Dendritic cell treated with granulocyte-macrophage colony-stimulating factor and Interleukin-4, amounts not matched to agents 40 ng/mL and 50 ng/mL, for 4 days (primary cell): ENCODE measurements at regions of chr2 and their contacts with region 1.

Region 1: DNA sequence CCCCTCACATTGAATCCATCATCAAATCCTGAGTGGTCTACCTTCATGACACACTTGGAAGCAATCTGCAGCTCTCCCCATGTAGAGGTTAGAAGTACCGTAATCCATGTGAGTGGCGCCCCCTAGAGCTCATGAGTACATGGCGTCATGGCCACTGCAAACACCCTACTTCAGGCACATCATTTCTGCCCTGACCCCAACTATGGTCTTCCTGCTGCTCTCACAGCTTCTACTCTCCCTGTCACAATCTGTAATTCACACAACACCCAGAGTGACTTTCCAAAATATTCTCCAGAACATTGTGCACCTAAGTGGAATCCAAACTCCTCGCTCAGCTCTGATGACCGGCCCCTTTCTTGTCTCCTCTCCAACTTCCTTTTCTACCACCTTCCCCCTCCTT is 141.9 kb downstream of the ANKRD44 start:
- H3K4me3 Mint-ChIP-seq: no peak overlapping the region
- H3K27ac Mint-ChIP-seq: peak overlapping the region; percentile 71
- H3K4me1 Mint-ChIP-seq: peaks cover 60% of the 10 kb centered on the region
- H3K27me3 Mint-ChIP-seq: no peaks in the 10 kb centered on the region

Region 2: GRCh38 chr2:196987649-196988364 is 180.9 kb before region 1 on chr2:
- intact Hi-C with region 1: no loop called
- H3K4me3 Mint-ChIP-seq: peak overlapping the region; percentile 48
- H3K27ac Mint-ChIP-seq: peak overlapping the region; percentile 84
- H3K4me1 Mint-ChIP-seq: peaks cover 41% of the 10 kb centered on the region
- H3K27me3 Mint-ChIP-seq: no peaks in the 10 kb centered on the region

Region 3: DNA sequence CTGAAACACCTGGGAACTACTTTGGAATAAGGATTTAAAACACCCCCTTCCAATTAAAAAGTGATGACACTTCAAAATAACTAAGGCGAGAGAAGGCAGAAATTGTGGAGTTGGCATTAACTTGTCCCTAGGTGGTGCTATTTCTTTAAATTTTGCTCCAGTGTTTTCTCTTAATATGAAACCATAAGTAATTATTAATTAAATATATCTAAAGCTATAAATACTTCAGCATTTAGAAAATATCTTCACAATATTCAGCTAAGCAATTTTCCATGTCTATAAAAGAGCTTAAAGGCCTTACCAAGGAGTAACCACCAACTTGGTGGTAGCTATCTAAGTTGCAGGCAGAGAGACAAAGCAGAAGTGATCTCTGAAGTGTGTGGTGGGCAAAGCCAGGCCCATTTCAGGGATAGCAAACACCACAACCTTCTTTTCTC is 55.4 kb before region 1 on chr2:
- intact Hi-C with region 1: loop called (anchors 2 kb)
- H3K4me3 Mint-ChIP-seq: no peak overlapping the region
- H3K27ac Mint-ChIP-seq: no peak overlapping the region
- H3K4me1 Mint-ChIP-seq: peaks cover 25% of the 10 kb centered on the region
- H3K27me3 Mint-ChIP-seq: no peaks in the 10 kb centered on the region

Region 4: GRCh38 chr2:197124639-197125390 is 43.9 kb before region 1 on chr2:
- intact Hi-C with region 1: loop called (anchors 5 kb)
- H3K4me3 Mint-ChIP-seq: no peak overlapping the region
- H3K27ac Mint-ChIP-seq: no peak overlapping the region
- H3K4me1 Mint-ChIP-seq: peaks cover 12% of the 10 kb centered on the region
- H3K27me3 Mint-ChIP-seq: no peaks in the 10 kb centered on the region

Region 5: DNA sequence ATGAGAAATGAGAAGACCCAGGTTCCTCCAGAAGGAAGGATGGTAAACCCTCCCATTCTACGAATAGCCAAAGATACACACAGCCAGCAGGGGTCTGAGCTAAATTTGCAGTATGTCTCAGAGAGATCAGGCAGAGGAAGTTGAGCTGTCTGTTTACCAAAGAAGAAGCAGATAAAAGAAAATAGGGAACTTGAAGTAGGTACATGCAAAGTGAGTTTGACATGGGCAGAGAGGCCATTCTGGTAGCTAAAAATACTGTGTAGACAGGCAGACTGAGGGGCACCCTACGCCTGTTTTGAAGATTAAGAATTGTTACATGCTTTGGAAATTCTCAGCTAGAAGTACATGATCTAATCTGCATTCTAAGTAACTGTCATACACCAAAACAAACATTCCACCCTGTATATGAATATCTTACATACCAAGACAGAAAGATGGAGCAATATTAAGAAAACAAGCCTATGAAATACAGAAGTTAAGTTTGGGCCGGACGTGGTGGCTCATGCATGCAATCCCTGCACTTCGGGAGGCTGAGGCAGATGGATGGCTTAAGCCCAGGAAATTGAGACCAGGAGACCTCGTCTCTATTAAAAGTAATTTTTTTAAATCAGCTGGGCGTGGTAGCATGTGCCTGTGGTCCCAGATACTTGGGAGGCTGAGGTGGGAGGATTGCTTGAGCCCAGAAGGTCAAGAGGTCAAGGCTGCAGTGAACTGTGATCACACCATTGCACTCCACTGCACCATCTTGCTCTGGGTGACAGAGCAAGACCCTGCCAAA is 16.1 kb before region 1 on chr2:
- intact Hi-C with region 1: loop called (anchors 2 kb)
- H3K4me3 Mint-ChIP-seq: peak overlapping the region; percentile 59
- H3K27ac Mint-ChIP-seq: peak overlapping the region; percentile 94
- H3K4me1 Mint-ChIP-seq: peaks cover 54% of the 10 kb centered on the region
- H3K27me3 Mint-ChIP-seq: no peaks in the 10 kb centered on the region

Region 6: DNA sequence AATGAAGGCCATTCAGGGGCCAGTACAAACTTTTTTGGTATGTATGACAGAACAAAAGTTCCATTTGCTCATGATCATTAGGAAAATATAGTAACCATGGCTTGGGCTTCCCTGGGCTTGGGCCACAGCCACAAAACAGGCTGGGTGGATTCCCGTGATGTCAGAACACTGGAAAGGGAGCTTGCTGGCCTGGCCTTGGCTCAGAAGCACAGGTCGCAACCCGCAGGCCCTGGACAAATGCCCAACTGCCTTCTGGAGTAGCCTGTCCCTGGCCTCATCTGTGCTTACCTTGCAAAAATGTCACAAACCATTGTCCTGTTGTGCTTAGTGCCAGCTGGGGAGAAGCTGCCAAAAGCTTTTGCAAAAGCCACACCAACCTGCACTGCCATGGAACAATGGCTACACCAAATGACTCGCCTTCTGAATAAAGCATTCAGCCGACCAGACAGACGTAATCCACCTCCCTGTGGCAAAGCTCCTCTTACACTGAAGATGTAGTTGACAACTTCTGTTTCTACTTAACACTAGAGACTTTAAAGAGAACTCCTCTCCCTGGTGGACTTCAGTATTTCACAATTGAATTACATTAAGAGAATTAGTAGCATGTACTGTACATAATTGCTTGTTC is 16.4 kb after region 1 on chr2:
- intact Hi-C with region 1: no loop called
- H3K4me3 Mint-ChIP-seq: no peak overlapping the region
- H3K27ac Mint-ChIP-seq: no peak overlapping the region
- H3K4me1 Mint-ChIP-seq: peaks cover 48% of the 10 kb centered on the region
- H3K27me3 Mint-ChIP-seq: no peaks in the 10 kb centered on the region

Region 7: GRCh38 chr2:197279997-197280746 is 111.5 kb after region 1 on chr2:
- intact Hi-C with region 1: no loop called
- H3K4me3 Mint-ChIP-seq: no peak overlapping the region
- H3K27ac Mint-ChIP-seq: peak overlapping the region; percentile 37
- H3K4me1 Mint-ChIP-seq: peaks cover 68% of the 10 kb centered on the region
- H3K27me3 Mint-ChIP-seq: no peaks in the 10 kb centered on the region

Region 8: DNA sequence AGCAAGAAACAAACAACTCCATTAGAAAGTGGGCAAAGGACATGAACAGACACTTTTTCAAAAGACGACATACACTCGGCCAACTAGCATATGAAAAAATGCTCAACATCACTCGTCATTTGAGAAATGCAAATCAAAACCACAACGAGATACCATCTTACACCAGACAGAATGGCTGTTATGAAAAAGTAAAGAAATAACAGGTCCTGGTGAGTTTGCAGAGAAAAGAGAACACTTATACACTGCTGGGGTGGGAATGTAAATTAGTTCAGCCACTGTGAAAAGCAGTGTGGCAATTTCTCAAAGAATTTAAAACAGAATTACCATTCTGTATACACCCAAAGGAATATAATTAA is 766.2 kb after region 1 on chr2:
- intact Hi-C with region 1: no loop called
- H3K4me3 Mint-ChIP-seq: no peak overlapping the region
- H3K27ac Mint-ChIP-seq: no peak overlapping the region
- H3K4me1 Mint-ChIP-seq: peaks cover 9% of the 10 kb centered on the region
- H3K27me3 Mint-ChIP-seq: peaks cover 6% of the 10 kb centered on the region